ENCODE measurements at regions of chr17 and their contacts with region 1.

Region 1: GRCh38 chr17:28951991-28952975 is 965 bp upstream of the PHF12 start:
- DNase-seq: peak; percentile 98
- H3K4me3 Mint-ChIP-seq: no peak overlapping the region
- H3K27ac Mint-ChIP-seq: no peak overlapping the region
- H3K4me1 Mint-ChIP-seq: peaks cover 17% of the 10 kb centered on the region
- H3K27me3 Mint-ChIP-seq: no peaks in the 10 kb centered on the region

Region 2: GRCh38 chr17:28644985-28645939 is 307.0 kb before region 1 on chr17 and contains the start of gene BLTP2:
- CTCF ChIA-PET with region 1: no interaction called
- intact Hi-C with region 1: loop called (anchors 1 kb)
- DNase-seq: peak; percentile 96
- H3K4me3 Mint-ChIP-seq: peak within 1 kb of the TSS; percentile 84
- H3K27ac Mint-ChIP-seq: peak within 1 kb of the TSS; percentile 86
- H3K4me1 Mint-ChIP-seq: peaks cover 36% of the 10 kb centered on the region
- H3K27me3 Mint-ChIP-seq: no peaks in the 10 kb centered on the region
- total RNA-seq, gene BLTP2: 89.4 to 92.0 TPM

Region 3: GRCh38 chr17:28743225-28744103 is 208.8 kb before region 1 on chr17 and contains the start of gene TRAF4:
- CTCF ChIA-PET with region 1: no interaction called
- intact Hi-C with region 1: loop called (anchors 1 kb)
- DNase-seq: peak; percentile 74
- H3K4me3 Mint-ChIP-seq: peak within 1 kb of the TSS; percentile 91
- H3K27ac Mint-ChIP-seq: peak within 1 kb of the TSS; percentile 85
- H3K4me1 Mint-ChIP-seq: peaks cover 45% of the 10 kb centered on the region
- H3K27me3 Mint-ChIP-seq: no peaks in the 10 kb centered on the region
- total RNA-seq, gene TRAF4: 75.9 to 80.4 TPM

Region 4: DNA sequence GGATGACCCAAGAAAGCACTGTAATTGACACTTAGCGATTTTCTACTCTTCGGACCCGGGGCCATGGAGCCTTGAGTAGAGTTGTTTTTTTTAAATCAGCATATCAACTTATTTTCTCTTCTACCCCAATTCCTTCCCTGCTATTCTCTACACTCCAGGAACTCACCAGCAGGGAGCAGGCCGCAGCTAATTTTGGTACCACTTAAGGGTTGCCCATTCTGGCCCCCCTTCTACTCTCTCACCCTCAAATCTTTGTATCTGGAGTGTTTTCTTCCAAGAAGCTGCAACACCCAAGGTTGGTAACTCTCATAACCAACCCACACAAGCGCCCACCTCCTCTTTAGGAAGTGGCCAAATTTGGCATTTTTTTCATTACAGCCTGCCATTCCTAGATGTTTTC is 103.0 kb before region 1 on chr17:
- CTCF ChIA-PET with region 1: interaction called, 7 read pairs
- intact Hi-C with region 1: loop called (anchors 1 kb)
- DNase-seq: peak; percentile 60
- H3K4me3 Mint-ChIP-seq: no peak overlapping the region
- H3K27ac Mint-ChIP-seq: no peak overlapping the region
- H3K4me1 Mint-ChIP-seq: no peaks in the 10 kb centered on the region
- H3K27me3 Mint-ChIP-seq: no peaks in the 10 kb centered on the region

Region 5: DNA sequence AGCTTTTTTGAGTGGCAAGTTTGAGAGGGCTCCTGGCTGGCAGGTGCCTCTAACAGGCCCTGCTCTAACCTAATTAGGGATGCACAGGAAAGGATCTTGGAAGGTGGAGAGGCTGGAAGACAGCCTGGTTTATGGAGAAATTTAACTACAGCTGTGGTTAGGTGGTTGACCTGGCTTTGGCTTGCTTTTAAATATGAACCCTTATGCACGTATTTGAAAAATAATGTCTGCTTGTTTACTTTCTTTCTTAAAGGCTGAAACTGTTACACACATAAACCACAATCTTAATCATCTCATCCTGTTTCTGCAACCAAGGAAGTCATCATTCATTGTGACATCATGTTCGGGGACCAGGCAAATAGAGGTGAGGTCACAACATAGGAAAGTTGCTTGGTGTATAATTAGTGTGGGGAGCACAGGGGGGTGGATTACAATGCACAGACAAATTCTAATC is 26.3 kb before region 1 on chr17:
- CTCF ChIA-PET with region 1: interaction called, 3 read pairs
- intact Hi-C with region 1: loop called (anchors 1 kb)
- DNase-seq: peak; percentile 58
- H3K4me3 Mint-ChIP-seq: no peak overlapping the region
- H3K27ac Mint-ChIP-seq: peak overlapping the region; percentile 76
- H3K4me1 Mint-ChIP-seq: peaks cover 63% of the 10 kb centered on the region
- H3K27me3 Mint-ChIP-seq: no peaks in the 10 kb centered on the region

Region 6: GRCh38 chr17:29116804-29117772 is 164.8 kb after region 1 on chr17:
- CTCF ChIA-PET with region 1: interaction called, 302 read pairs
- intact Hi-C with region 1: loop called (anchors 5 kb)
- DNase-seq: peak; percentile 88
- H3K4me3 Mint-ChIP-seq: no peak overlapping the region
- H3K27ac Mint-ChIP-seq: no peak overlapping the region
- H3K4me1 Mint-ChIP-seq: peaks cover 9% of the 10 kb centered on the region
- H3K27me3 Mint-ChIP-seq: no peaks in the 10 kb centered on the region

Region 7: GRCh38 chr17:29233301-29233700 is 281.0 kb after region 1 on chr17:
- CTCF ChIA-PET with region 1: no interaction called
- intact Hi-C with region 1: no loop called
- DNase-seq: no peak
- H3K4me3 Mint-ChIP-seq: no peak overlapping the region
- H3K27ac Mint-ChIP-seq: no peak overlapping the region
- H3K4me1 Mint-ChIP-seq: no peaks in the 10 kb centered on the region
- H3K27me3 Mint-ChIP-seq: no peaks in the 10 kb centered on the region

Measured in activated naive CD4-positive, alpha-beta T cell treated with anti-CD3 and anti-CD28 coated beads for 36 hours (primary cell).